Aorta (tissue), 5 donors: ENCODE measurements at regions of chrX and their contacts with region 1.

Region 1: GRCh38 chrX:153934473-153935325 is at the start of gene NAA10:
- DNase-seq: peak; percentile 81 to 91
- ATAC-seq: peak; percentile 93
- H3K4me3 ChIP-seq: peak within 1 kb of the TSS; percentile 49 to 55
- H3K27ac ChIP-seq: no peak within 1 kb of the TSS
- H3K4me1 ChIP-seq: no peaks in the 10 kb centered on the region
- H3K27me3 ChIP-seq: no peaks in the 10 kb centered on the region
- total RNA-seq, gene NAA10: 70.2 to 87.3 TPM

Region 2: DNA sequence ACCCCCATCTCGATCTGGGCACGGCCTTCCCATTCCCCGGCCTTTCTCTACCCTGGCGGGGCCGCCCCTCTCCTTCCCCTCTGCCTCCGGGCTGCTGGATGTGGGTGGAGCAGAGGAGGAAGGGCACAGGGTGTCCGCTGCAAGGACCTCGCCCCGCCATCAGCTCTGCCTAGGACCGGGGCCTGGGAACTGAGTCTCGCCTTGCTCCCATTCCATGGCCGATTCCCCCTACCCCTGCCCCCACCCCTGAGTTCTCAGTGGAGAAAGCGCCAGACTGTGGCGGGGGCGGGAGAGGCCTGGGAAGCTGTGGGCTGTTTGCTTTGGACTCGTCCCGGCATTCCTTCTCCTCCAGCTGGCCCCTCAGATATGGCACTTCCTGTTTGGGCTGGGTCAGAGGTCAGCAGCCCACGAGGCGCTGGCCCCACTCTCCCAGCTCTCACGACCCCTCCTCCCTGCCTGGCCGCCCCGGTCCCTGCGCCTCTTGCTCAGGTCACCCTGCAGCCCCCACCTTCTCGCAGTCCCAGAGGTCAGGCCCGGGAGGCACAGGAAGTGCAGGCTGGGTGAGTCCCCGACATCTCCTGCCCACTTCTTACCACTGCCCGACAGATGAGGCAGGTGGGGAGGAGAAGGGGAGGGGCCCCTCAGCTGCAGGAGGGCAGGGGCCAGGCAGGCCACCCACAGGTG is 446.3 kb before region 1 on chrX:
- intact Hi-C with region 1: no loop called
- DNase-seq: peak; percentile 88 to 91
- ATAC-seq: peak; percentile 67
- H3K4me3 ChIP-seq: no peak overlapping the region
- H3K27ac ChIP-seq: peak overlapping the region; percentile 52 to 94
- H3K4me1 ChIP-seq: no peaks in the 10 kb centered on the region
- H3K27me3 ChIP-seq: no peaks in the 10 kb centered on the region

Region 3: DNA sequence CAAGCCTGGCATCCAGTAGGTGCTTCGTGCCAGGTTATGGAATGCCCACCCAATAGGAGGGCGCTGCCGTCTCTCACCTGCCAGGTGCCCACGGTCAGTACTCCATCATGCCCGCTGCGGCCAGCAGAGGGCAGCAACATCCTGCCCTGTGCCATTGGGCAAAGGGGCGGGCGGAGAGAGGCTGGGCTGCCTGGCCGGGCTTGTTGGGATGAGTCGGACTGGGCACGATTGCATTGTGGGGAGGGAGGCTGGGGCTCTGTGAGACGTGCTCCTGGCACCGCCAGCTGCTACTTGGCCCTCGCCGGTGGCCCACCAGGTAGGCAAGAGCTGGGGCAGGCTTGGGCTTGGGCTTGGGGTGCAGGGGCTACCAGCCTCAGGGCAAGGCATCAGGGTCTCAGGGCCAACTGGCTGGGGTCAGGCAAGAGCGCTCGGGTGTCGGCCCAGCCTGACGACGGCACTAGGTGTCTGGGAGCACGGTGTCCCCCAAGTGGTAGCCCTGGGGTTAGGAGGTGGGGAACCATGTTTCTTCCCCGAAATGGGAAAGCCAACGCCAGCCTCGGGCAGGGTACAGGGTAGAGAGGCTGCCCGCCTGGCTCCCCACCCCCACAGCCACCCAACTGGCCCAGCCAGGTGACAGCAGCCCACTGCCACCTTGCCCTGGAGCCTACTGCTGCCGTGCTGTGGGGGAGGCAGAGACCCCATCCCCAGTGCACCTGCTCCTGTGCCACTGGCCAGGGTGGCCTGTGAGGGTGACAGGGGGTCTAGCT is 170.5 kb before region 1 on chrX and contains the start of gene PLXNB3:
- intact Hi-C with region 1: loop called in 1 of 2 experiments (anchors 5 kb)
- DNase-seq: peak; percentile 89 to 93
- ATAC-seq: peak; percentile 77
- H3K4me3 ChIP-seq: no peak within 1 kb of the TSS
- H3K27ac ChIP-seq: no peak within 1 kb of the TSS
- H3K4me1 ChIP-seq: no peaks in the 10 kb centered on the region
- H3K27me3 ChIP-seq: no peaks in the 10 kb centered on the region
- total RNA-seq, gene PLXNB3: 18.0 to 18.7 TPM

Region 4: GRCh38 chrX:153966283-153966688 is 31.6 kb after region 1 on chrX:
- intact Hi-C with region 1: no loop called
- DNase-seq: peak; percentile 53 to 77
- ATAC-seq: no peak
- H3K4me3 ChIP-seq: no peak overlapping the region
- H3K27ac ChIP-seq: no peak overlapping the region
- H3K4me1 ChIP-seq: no peaks in the 10 kb centered on the region
- H3K27me3 ChIP-seq: no peaks in the 10 kb centered on the region